ENCODE measurements at regions of chr16 and their contacts with region 1.

Region 1: DNA sequence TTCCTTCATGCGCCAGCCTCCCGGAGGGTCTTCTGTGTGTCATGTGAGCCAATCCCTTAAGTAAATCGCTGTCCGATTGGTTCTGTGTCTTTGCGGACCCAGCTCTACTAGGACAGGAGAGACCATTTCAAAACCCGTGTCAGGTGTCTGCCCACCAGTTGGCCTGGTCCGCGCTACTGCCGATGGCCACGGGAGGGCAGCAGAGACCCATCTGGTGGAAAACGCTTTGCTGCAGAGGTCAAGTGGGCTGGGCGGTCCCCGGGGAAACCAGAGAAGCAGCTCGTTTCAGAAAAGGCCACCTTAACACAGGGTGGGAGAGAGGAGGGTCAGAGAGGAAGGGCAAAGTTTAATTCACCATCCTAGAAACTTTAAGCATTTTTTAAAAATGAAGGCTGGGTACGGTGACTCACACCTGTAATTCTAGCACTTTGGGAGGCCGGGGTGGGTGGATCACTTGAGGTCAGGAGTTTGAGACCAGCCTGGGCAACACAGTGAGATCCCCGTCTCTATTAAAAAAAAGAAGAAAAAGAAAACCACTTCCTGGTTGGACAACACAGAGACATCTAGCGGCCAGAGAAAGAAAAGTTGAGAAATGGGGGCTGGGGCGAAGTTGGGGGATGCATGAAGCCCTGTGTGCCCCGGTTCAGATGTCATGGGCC is 2.8 kb upstream of the CIBAR2 start:
- DNase-seq: peak; percentile 93
- H3K4me3 ChIP-seq: peak overlapping the region in 3 of 4 donors; percentile 11 to 34 (median 25)
- H3K27ac ChIP-seq: peak overlapping the region in 3 of 4 donors; percentile 32 to 62 (median 52)
- H3K4me1 ChIP-seq: peaks cover 0 to 8% (median 6%) of the 10 kb centered on the region in 4 donors
- H3K27me3 ChIP-seq: no peaks in the 10 kb centered on the region
- CTCF ChIP-seq: peak; percentile 97 to 98 (median 98)
- EP300 ChIP-seq: no peak
- POLR2A ChIP-seq: no peak

Region 2: GRCh38 chr16:85168732-85169256 is 53.8 kb after region 1 on chr16:
- intact Hi-C with region 1: loop called (anchors 5 kb)
- DNase-seq: peak; percentile 90
- H3K4me3 ChIP-seq: peak overlapping the region; percentile 3 to 42 (median 34)
- H3K27ac ChIP-seq: peak overlapping the region; percentile 53 to 75 (median 68)
- H3K4me1 ChIP-seq: peaks cover 0 to 87% (median 75%) of the 10 kb centered on the region in 4 donors
- H3K27me3 ChIP-seq: no peaks in the 10 kb centered on the region
- CTCF ChIP-seq: no peak
- EP300 ChIP-seq: no peak
- POLR2A ChIP-seq: no peak

Region 3: GRCh38 chr16:85220125-85220839 is 105.2 kb after region 1 on chr16:
- intact Hi-C with region 1: loop called (anchors 1 kb)
- DNase-seq: peak; percentile 93
- H3K4me3 ChIP-seq: peak overlapping the region in 3 of 4 donors; percentile 28 to 38 (median 35)
- H3K27ac ChIP-seq: peak overlapping the region; percentile 71 to 83 (median 76)
- H3K4me1 ChIP-seq: peaks cover 0 to 25% (median 21%) of the 10 kb centered on the region in 4 donors
- H3K27me3 ChIP-seq: no peaks in the 10 kb centered on the region
- CTCF ChIP-seq: no peak
- EP300 ChIP-seq: peak in 1 of 4 donors; percentile 13
- POLR2A ChIP-seq: no peak

Region 4: GRCh38 chr16:85238233-85238647 is 123.2 kb after region 1 on chr16:
- intact Hi-C with region 1: loop called (anchors 2 kb)
- DNase-seq: peak; percentile 93
- H3K4me3 ChIP-seq: no peak overlapping the region
- H3K27ac ChIP-seq: peak overlapping the region; percentile 54 to 62 (median 56)
- H3K4me1 ChIP-seq: peaks cover 0 to 55% (median 43%) of the 10 kb centered on the region in 4 donors
- H3K27me3 ChIP-seq: no peaks in the 10 kb centered on the region
- CTCF ChIP-seq: no peak
- EP300 ChIP-seq: peak in 1 of 4 donors; percentile 3
- POLR2A ChIP-seq: no peak

Measured in sigmoid colon (tissue), 7 donors.